PC-9 (cell line): ENCODE measurements at regions of chr3 and their contacts with region 1.

Region 1: GRCh38 chr3:16279010-16279801 is 14.2 kb downstream of the OXNAD1 start:
- DNase-seq: no peak
- H3K4me3 ChIP-seq: no peak overlapping the region
- H3K27ac ChIP-seq: no peak overlapping the region
- H3K4me1 ChIP-seq: no peaks in the 10 kb centered on the region
- H3K27me3 ChIP-seq: no peaks in the 10 kb centered on the region
- CTCF ChIP-seq: no peak

Region 2: GRCh38 chr3:16568532-16568931 is 289.3 kb after region 1 on chr3:
- CTCF ChIA-PET with region 1: no interaction called
- POLR2A ChIA-PET with region 1: interaction called, 15 read pairs
- intact Hi-C with region 1: no loop called
- DNase-seq: no peak
- H3K4me3 ChIP-seq: no peak overlapping the region
- H3K27ac ChIP-seq: no peak overlapping the region
- H3K4me1 ChIP-seq: no peaks in the 10 kb centered on the region
- H3K27me3 ChIP-seq: no peaks in the 10 kb centered on the region
- CTCF ChIP-seq: no peak